ENCODE measurements at regions of chr4 and their contacts with region 1.

Region 1: GRCh38 chr4:119286377-119287002 is 35.4 kb downstream of the FABP2 start:
- DNase-seq: peak; percentile 64
- H3K4me3 Mint-ChIP-seq: no peak overlapping the region
- H3K27ac Mint-ChIP-seq: no peak overlapping the region
- H3K4me1 Mint-ChIP-seq: peaks cover 18% of the 10 kb centered on the region
- H3K27me3 Mint-ChIP-seq: no peaks in the 10 kb centered on the region
- CTCF ChIP-seq: peak; percentile 54

Region 2: GRCh38 chr4:119087121-119087520 is 199.4 kb before region 1 on chr4:
- CTCF ChIA-PET with region 1: interaction called, 4 read pairs
- POLR2A ChIA-PET with region 1: no interaction called
- intact Hi-C with region 1: loop called (anchors 1 kb)
- DNase-seq: no peak
- H3K4me3 Mint-ChIP-seq: no peak overlapping the region
- H3K27ac Mint-ChIP-seq: no peak overlapping the region
- H3K4me1 Mint-ChIP-seq: no peaks in the 10 kb centered on the region
- H3K27me3 Mint-ChIP-seq: no peaks in the 10 kb centered on the region
- CTCF ChIP-seq: no peak

Region 3: DNA sequence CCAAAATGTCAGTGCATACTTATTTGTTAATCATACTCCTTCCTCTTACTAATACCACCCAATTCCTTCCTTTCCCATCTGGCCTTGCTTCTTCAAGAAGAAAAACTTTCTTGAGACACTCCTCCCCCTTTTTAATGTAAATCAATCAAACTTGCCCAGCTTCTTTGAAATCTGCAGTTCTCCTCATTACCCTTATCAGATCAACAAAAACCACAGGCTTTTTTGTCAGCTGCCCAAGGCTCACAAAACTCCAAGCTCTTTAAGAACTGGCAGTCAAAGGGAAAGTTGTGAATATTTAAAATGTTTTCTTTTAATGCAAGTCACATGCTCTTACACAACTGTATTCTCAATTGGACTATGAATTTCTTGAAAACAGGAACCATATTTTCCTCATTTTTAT is 162.1 kb before region 1 on chr4:
- CTCF ChIA-PET with region 1: no interaction called
- POLR2A ChIA-PET with region 1: no interaction called
- intact Hi-C with region 1: no loop called
- DNase-seq: no peak
- H3K4me3 Mint-ChIP-seq: no peak overlapping the region
- H3K27ac Mint-ChIP-seq: no peak overlapping the region
- H3K4me1 Mint-ChIP-seq: no peaks in the 10 kb centered on the region
- H3K27me3 Mint-ChIP-seq: no peaks in the 10 kb centered on the region
- CTCF ChIP-seq: no peak

Region 4: DNA sequence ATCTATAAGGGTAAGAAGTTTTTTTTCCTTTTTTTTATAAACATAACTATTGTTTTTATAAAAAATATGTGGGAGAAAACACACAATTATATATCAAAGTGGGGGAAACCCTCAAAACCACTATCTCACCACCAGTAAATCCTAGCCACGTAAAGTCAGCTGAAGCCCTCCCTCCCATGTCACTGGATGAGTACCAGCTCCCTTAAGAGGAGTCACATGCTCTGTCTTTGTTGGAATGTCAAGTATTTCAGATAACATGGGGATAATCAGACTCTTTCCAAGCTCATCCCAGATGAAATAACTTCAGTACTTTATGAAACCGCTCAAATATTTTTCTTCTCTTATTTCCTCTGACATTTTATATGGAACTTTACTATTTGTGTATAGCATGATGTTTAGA is 148.4 kb before region 1 on chr4:
- CTCF ChIA-PET with region 1: no interaction called
- POLR2A ChIA-PET with region 1: no interaction called
- intact Hi-C with region 1: no loop called
- DNase-seq: no peak
- H3K4me3 Mint-ChIP-seq: no peak overlapping the region
- H3K27ac Mint-ChIP-seq: no peak overlapping the region
- H3K4me1 Mint-ChIP-seq: peaks cover 23% of the 10 kb centered on the region
- H3K27me3 Mint-ChIP-seq: no peaks in the 10 kb centered on the region
- CTCF ChIP-seq: no peak

Region 5: DNA sequence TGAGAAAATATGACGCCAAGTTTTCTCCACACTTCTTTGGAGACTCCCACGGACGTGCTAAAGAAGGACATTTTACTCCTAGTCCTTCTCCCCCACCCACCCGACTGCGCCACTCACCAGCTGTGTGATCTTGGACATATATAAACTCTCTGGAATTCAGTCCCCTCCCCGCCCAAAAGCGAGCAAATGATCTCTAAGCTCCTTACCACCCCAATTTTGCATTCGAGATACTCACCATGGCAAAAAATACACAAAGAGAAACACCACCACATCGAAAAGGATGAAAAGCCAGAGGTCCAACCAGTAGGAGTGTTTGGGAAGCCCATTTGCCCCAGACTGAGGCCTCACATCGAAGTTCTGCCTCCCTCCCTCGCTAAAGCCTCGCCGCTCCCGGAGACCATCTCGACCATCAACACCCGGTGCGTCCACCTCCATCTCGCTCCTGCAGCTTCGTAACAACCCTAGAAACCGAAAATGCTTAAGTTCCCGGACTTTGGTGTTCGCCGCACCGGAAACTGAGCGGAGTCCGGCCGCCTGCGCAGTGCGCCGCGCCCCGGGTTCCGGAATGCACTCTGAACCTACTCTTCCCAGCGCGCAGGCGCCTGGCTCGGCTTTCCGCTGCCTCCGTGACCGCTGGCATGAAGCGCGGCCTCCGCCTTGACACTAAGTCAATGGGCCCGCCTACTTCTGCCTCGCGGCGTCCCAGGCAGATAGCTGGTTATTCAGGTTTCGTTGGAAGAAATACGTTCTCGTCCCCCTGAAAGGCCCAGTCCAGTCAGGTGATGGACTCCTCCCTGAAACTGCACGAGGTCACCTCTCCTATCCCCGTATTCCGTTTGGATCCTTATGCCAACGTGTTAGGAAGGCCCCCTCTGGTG is 13.8 kb after region 1 on chr4:
- CTCF ChIA-PET with region 1: interaction called, 8 read pairs
- POLR2A ChIA-PET with region 1: interaction called, 13 read pairs
- intact Hi-C with region 1: no loop called
- DNase-seq: peak; percentile 92
- H3K4me3 Mint-ChIP-seq: peak overlapping the region; percentile 93
- H3K27ac Mint-ChIP-seq: peak overlapping the region; percentile 97
- H3K4me1 Mint-ChIP-seq: peaks cover 12% of the 10 kb centered on the region
- H3K27me3 Mint-ChIP-seq: no peaks in the 10 kb centered on the region
- CTCF ChIP-seq: no peak

Measured in MCF 10A (cell line).